Common myeloid progenitor, CD34-positive (primary cell): ENCODE measurements at regions of chr1 and their contacts with region 1.

Region 1: GRCh38 chr1:148352470-148353261 is 130.4 kb downstream of the PPIAL4G start:
- DNase-seq: no peak
- H3K4me3 ChIP-seq: no peak overlapping the region
- H3K27ac ChIP-seq: no peak overlapping the region
- H3K4me1 ChIP-seq: peaks cover 0 to 22% (median 12%) of the 10 kb centered on the region in 4 experiments
- H3K27me3 ChIP-seq: peaks cover 9 to 23% (median 15%) of the 10 kb centered on the region in 5 experiments

Region 2: DNA sequence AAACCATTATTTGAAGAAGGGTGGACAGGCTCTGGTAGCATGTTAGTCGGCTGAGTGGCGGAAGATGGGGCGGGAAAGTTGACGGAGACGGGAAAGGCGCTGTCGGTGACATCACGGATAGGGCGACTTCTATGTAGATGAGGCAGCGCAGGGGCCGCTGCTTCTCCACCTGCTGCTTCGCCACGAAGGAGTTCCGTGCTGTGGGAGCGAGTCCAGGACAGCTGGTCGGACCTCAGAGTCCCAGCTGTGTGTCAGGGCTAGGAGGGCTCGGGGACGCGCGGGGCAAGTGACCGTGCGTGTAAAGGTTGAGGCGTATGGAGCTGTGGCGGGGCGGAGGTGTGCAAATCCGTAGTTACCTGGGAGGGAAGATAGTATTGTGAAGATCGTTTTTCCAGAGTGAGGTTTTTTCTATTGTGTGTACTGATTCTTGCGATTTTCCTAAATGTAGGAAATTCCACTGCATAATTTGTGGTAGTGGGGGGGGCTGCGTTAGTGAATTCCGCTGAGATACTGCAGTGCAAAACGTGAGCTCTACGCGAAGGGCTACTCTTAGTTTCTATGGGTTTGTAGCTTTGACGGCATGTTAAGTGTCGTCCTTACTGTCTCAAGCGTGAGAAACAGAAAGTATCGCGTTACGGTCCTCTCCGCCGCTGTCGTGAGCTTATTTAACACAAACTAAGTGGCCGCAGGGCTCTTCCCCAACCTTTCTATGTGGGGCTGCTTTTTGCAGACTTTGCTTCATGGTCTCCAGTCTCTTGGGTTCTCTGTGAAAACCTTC is 89.3 kb before region 1 on chr1:
- CTCF ChIA-PET with region 1: no interaction called
- POLR2A ChIA-PET with region 1: no interaction called
- DNase-seq: peak; percentile 91 to 95 (median 91)
- H3K4me3 ChIP-seq: peak overlapping the region; percentile 49 to 88 (median 68)
- H3K27ac ChIP-seq: peak overlapping the region; percentile 79 to 91
- H3K4me1 ChIP-seq: peaks cover 0 to 14% (median 8%) of the 10 kb centered on the region in 4 experiments
- H3K27me3 ChIP-seq: peaks cover 0 to 12% (median 0%) of the 10 kb centered on the region in 5 experiments

Region 3: DNA sequence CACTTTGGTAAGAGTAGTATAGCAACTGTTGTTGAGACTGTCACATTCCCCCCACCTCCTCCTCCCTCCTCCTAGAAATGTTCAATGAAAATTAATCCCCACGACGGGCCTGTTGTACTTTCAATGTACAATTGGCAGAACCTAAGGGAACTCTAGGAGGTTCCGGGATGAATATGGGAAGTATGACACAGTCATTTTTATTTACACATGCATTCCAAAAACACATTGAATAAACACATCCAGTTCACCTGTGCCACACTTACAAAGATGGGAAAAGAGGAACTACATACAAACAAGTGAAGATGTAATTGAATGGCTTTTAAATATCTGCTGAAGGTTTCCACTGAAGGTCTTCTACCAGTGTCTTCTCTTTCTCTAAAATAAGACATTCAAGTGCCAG is 56.1 kb before region 1 on chr1:
- CTCF ChIA-PET with region 1: no interaction called
- POLR2A ChIA-PET with region 1: no interaction called
- DNase-seq: no peak
- H3K4me3 ChIP-seq: no peak overlapping the region
- H3K27ac ChIP-seq: no peak overlapping the region
- H3K4me1 ChIP-seq: peaks cover 0 to 10% (median 8%) of the 10 kb centered on the region in 4 experiments
- H3K27me3 ChIP-seq: no peaks in the 10 kb centered on the region

Region 4: GRCh38 chr1:148372731-148373130 is 20.1 kb after region 1 on chr1:
- CTCF ChIA-PET with region 1: interaction called, 13 read pairs
- POLR2A ChIA-PET with region 1: no interaction called
- DNase-seq: no peak
- H3K4me3 ChIP-seq: no peak overlapping the region
- H3K27ac ChIP-seq: no peak overlapping the region
- H3K4me1 ChIP-seq: peaks cover 0 to 35% (median 18%) of the 10 kb centered on the region in 4 experiments
- H3K27me3 ChIP-seq: no peaks in the 10 kb centered on the region